Mammary epithelial cell (primary cell): ENCODE measurements at regions of chr11 and their contacts with region 1.

Region 1: GRCh38 chr11:118126082-118126838 is 26.4 kb downstream of the SCN4B start:
- DNase-seq: peak; percentile 66
- H3K4me3 ChIP-seq: no peak overlapping the region
- H3K27ac ChIP-seq: no peak overlapping the region
- H3K4me1 ChIP-seq: no peaks in the 10 kb centered on the region
- H3K27me3 ChIP-seq: no peaks in the 10 kb centered on the region
- CTCF ChIP-seq: no peak

Region 2: GRCh38 chr11:118060869-118061268 is 65.4 kb before region 1 on chr11:
- CTCF ChIA-PET with region 1: no interaction called
- dilution Hi-C with region 1: loop called (anchors 5 kb)
- in situ Hi-C with region 1: no loop called
- intact Hi-C with region 1: no loop called
- DNase-seq: no peak
- H3K4me3 ChIP-seq: no peak overlapping the region
- H3K27ac ChIP-seq: no peak overlapping the region
- H3K4me1 ChIP-seq: no peaks in the 10 kb centered on the region
- H3K27me3 ChIP-seq: peaks cover 6% of the 10 kb centered on the region
- CTCF ChIP-seq: no peak

Region 3: GRCh38 chr11:118171269-118172062 is 45.2 kb after region 1 on chr11:
- CTCF ChIA-PET with region 1: no interaction called
- dilution Hi-C with region 1: loop called (anchors 5 kb)
- in situ Hi-C with region 1: no loop called
- intact Hi-C with region 1: no loop called
- DNase-seq: peak; percentile 37
- H3K4me3 ChIP-seq: no peak overlapping the region
- H3K27ac ChIP-seq: no peak overlapping the region
- H3K4me1 ChIP-seq: peaks cover 23% of the 10 kb centered on the region
- H3K27me3 ChIP-seq: no peaks in the 10 kb centered on the region
- CTCF ChIP-seq: peak; percentile 64 to 91